ENCODE measurements at regions of chr2 and their contacts with region 1.

Region 1: GRCh38 chr2:30072250-30072842 is 74.5 kb upstream of the YPEL5 start:
- DNase-seq: peak; percentile 42 to 64 (median 45)
- H3K4me3 ChIP-seq: no peak overlapping the region
- H3K4me3 Mint-ChIP-seq: peak overlapping the region in 1 of 8 donors; percentile 21
- H3K27ac ChIP-seq: no peak overlapping the region
- H3K27ac Mint-ChIP-seq: no peak overlapping the region
- H3K4me1 ChIP-seq: no peaks in the 10 kb centered on the region
- H3K4me1 Mint-ChIP-seq: no peaks in the 10 kb centered on the region
- H3K27me3 ChIP-seq: no peaks in the 10 kb centered on the region
- H3K27me3 Mint-ChIP-seq: peaks cover 31 to 32% of the 10 kb centered on the region in 2 donors

Region 2: DNA sequence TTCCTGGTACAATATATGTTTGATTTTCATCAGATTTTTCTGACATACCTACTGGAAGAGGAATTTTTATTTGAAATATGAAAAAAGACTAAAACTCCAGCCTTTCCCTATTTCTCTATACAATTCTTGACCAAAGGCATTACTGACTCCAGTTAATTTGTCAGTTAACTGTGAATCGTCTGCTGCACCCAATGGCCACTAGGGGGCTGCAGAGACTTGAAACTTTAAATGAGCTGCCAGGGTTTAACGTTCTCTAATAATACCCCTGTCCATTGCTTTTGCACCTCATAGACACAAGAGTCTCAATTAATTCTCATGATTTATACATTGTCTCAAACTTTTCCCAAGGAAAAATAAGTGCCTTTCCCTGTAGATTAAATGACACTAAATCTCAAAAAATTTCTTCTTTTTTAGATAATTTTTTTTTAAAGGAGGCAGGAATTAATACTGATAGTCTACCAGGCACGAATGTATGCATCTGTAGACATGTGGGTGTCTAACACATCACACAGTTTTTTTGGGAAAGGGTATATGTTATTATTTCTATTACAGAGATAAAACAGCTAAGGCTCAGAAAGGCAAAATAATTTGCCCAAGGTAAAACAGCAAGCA is 149.1 kb before region 1 on chr2:
- CTCF ChIA-PET with region 1: interaction called, 21 read pairs
- POLR2A ChIA-PET with region 1: no interaction called
- intact Hi-C with region 1: loop called (anchors 1 kb)
- DNase-seq: peak in 4 of 5 donors; percentile 19 to 29 (median 24)
- H3K4me3 ChIP-seq: no peak overlapping the region
- H3K4me3 Mint-ChIP-seq: peak overlapping the region in 1 of 8 donors; percentile 6
- H3K27ac ChIP-seq: no peak overlapping the region
- H3K27ac Mint-ChIP-seq: no peak overlapping the region
- H3K4me1 ChIP-seq: peaks cover 15% of the 10 kb centered on the region
- H3K4me1 Mint-ChIP-seq: peaks cover 1 to 20% (median 11%) of the 10 kb centered on the region in 4 donors
- H3K27me3 ChIP-seq: peaks cover 20% of the 10 kb centered on the region
- H3K27me3 Mint-ChIP-seq: peaks cover 37 to 38% of the 10 kb centered on the region in 2 donors